ENCODE measurements at regions of chr16 and their contacts with region 1.

Region 1: DNA sequence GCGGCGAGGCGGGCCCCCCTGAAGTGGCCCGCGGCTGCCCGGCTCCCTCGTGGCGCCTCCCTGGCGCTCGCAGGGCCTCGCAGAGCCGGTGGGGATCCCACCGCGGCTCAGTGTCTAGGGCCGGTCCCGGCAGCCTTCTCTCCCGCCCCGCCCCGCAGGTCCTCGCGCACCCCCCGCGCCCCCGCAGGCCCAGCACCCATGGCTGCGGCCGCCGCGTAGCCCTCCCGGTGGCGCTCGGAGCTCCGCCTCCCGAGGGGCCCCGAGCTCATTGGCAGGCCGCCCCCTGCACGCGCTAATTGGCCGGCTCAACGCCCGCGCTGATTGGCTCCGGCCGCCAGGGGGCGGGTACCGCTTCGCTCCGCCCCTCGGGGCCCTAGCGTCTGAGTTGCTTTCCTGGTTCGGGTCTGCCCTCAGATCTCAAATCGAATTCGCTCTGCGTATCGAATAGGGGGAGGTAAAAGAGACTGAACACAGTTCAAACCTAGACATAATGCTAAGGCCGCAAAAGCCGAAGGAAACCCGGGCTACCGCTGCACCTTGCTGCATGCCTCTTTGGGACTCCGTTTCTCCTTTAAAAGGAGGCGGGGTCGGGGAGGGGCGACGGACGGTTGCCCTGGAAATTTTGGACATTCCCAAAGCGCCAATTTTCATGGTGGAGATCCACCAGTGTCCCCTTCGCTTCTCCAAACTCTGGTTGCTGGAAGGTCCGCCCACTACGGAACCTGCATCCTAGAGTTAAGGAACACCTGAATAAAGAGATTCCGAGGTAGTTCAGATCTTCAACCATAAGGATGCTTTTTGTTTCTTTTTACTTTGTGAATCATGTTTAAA is at the start of gene DEXI:
- DNase-seq: peak; percentile 69
- ATAC-seq: peak; percentile 80
- H3K4me3 ChIP-seq: peak within 1 kb of the TSS; percentile 82
- H3K27ac ChIP-seq: peak within 1 kb of the TSS; percentile 72
- H3K4me1 ChIP-seq: peaks cover 32% of the 10 kb centered on the region
- H3K27me3 ChIP-seq: no peaks in the 10 kb centered on the region
- CTCF ChIP-seq: peak in 1 of 3 experiments; percentile 9; a peak in 1 of 6 replicates
- EP300 ChIP-seq: no peak
- POLR2A ChIP-seq: peak; percentile 79
- RAD21 ChIP-seq: no peak
- polyA plus RNA-seq, gene DEXI: 1.4 to 4.3 TPM

Region 2: DNA sequence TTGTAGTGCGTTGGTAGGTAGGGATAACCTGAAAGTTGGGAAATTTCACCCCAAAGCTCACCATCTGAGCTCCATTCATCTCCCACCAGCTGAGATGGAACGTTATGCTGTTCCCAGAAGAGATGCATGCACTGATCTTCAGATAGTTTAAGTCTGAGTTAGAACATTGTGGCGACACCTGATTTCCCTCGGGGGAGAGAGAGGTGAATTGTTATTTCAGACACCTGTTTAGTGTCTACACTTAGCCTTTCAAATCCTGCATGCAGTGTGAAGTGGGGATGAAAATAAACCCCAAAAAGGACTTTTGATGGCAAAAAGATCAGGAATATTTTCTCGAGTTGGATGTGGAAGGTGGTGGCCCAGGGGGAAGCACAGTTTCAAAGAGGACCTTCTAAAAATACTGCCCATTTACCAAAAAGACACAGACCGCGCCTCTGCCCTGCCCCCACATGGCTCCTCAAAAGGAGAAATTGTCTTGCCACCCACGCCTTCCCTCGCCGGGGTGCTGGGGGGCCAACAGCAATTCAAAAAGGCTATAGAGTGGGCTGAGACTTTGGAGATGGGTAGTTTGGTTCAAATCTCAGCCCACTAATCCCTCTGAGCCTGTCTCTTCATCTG is 54.0 kb before region 1 on chr16:
- CTCF ChIA-PET with region 1: interaction called, 4 read pairs
- POLR2A ChIA-PET with region 1: interaction called, 12 read pairs
- RAD21 ChIA-PET with region 1: interaction called, 10 read pairs
- SMC1A ChIA-PET with region 1: interaction called, 7 read pairs
- in situ Hi-C with region 1: no loop called
- intact Hi-C with region 1: no loop called
- DNase-seq: no peak
- ATAC-seq: peak; percentile 7; the same call in 1 of the 3 replicates
- H3K4me3 ChIP-seq: peak overlapping the region; percentile 67
- H3K27ac ChIP-seq: peak overlapping the region; percentile 59
- H3K4me1 ChIP-seq: peaks cover 96% of the 10 kb centered on the region
- H3K27me3 ChIP-seq: no peaks in the 10 kb centered on the region
- CTCF ChIP-seq: no peak
- EP300 ChIP-seq: no peak; a peak in 1 of 4 replicates
- POLR2A ChIP-seq: no peak
- RAD21 ChIP-seq: 0 out of 2 replicates have a peak, but pooled peaks have one; percentile 17

Region 3: GRCh38 chr16:11114366-11115164 is 172.1 kb after region 1 on chr16:
- CTCF ChIA-PET with region 1: no interaction called
- POLR2A ChIA-PET with region 1: no interaction called
- RAD21 ChIA-PET with region 1: no interaction called
- SMC1A ChIA-PET with region 1: no interaction called
- in situ Hi-C with region 1: no loop called
- intact Hi-C with region 1: no loop called
- DNase-seq: no peak
- ATAC-seq: no peak
- H3K4me3 ChIP-seq: no peak overlapping the region
- H3K27ac ChIP-seq: peak overlapping the region; percentile 52
- H3K4me1 ChIP-seq: peaks cover 39% of the 10 kb centered on the region
- H3K27me3 ChIP-seq: no peaks in the 10 kb centered on the region
- CTCF ChIP-seq: no peak
- EP300 ChIP-seq: no peak
- POLR2A ChIP-seq: no peak
- RAD21 ChIP-seq: no peak

Measured in GM12878 (cell line).